ENCODE measurements at regions of chr2 and their contacts with region 1.

Region 1: DNA sequence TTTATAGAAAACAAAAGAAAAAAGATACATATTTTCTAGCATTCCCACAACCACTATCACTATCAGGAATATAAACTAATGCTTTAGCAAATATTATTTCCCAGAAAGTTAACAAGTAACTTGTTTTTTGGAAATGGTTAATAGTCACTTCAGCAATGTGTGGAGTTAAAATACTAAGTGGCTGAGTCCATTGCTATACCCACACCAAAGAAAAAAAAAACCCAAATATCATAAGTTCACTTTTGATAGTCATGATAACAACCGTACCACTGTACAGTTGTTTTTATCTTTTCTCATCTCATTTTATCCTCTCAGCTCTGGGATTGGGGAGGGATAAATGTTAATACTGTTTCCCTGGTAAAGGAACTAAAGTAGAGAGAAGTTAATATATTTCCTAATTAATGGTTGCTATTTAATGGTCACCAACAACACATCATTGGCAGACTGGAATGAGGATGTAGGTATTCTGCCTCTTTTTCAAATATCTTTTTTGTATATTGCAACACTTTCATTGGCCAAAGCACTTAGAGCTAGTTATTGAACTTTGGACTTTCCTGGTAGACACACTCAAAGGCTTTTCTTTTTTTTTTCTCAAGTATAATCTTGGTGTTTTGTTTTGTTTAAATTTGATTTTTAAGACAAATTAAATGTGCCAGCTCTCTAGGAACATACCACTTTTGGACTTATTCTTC is 18.4 kb upstream of the KANSL1L start:
- DNase-seq: no peak
- ATAC-seq: peak; percentile 75
- H3K4me3 ChIP-seq: no peak overlapping the region
- H3K27ac ChIP-seq: no peak overlapping the region
- H3K4me1 ChIP-seq: no peaks in the 10 kb centered on the region
- H3K27me3 ChIP-seq: no peaks in the 10 kb centered on the region
- CTCF ChIP-seq: no peak
- EP300 ChIP-seq: no peak
- POLR2A ChIP-seq: no peak
- RAD21 ChIP-seq: no peak

Region 2: GRCh38 chr2:210177769-210178168 is 11.8 kb before region 1 on chr2:
- CTCF ChIA-PET with region 1: interaction called, 5 read pairs
- POLR2A ChIA-PET with region 1: interaction called, 3 read pairs
- RAD21 ChIA-PET with region 1: interaction called, 6 read pairs
- SMC1A ChIA-PET with region 1: interaction called, 10 read pairs
- in situ Hi-C with region 1: no loop called
- intact Hi-C with region 1: no loop called
- DNase-seq: no peak
- ATAC-seq: no peak
- H3K4me3 ChIP-seq: no peak overlapping the region
- H3K27ac ChIP-seq: no peak overlapping the region
- H3K4me1 ChIP-seq: no peaks in the 10 kb centered on the region
- H3K27me3 ChIP-seq: no peaks in the 10 kb centered on the region
- CTCF ChIP-seq: no peak
- EP300 ChIP-seq: no peak
- POLR2A ChIP-seq: no peak
- RAD21 ChIP-seq: no peak

Region 3: GRCh38 chr2:210445116-210445707 is 255.6 kb after region 1 on chr2:
- CTCF ChIA-PET with region 1: no interaction called
- POLR2A ChIA-PET with region 1: no interaction called
- RAD21 ChIA-PET with region 1: no interaction called
- SMC1A ChIA-PET with region 1: no interaction called
- in situ Hi-C with region 1: no loop called
- intact Hi-C with region 1: no loop called
- DNase-seq: no peak
- ATAC-seq: peak; percentile 58
- H3K4me3 ChIP-seq: no peak overlapping the region
- H3K27ac ChIP-seq: no peak overlapping the region
- H3K4me1 ChIP-seq: peaks cover 5% of the 10 kb centered on the region
- H3K27me3 ChIP-seq: no peaks in the 10 kb centered on the region
- CTCF ChIP-seq: peak; percentile 52 to 62 (median 53)
- EP300 ChIP-seq: no peak
- POLR2A ChIP-seq: no peak
- RAD21 ChIP-seq: peak; percentile 64

Measured in GM12878 (cell line).